Motor neuron (in vitro differentiated cells): ENCODE measurements at regions of chr7 and their contacts with region 1.

Region 1: DNA sequence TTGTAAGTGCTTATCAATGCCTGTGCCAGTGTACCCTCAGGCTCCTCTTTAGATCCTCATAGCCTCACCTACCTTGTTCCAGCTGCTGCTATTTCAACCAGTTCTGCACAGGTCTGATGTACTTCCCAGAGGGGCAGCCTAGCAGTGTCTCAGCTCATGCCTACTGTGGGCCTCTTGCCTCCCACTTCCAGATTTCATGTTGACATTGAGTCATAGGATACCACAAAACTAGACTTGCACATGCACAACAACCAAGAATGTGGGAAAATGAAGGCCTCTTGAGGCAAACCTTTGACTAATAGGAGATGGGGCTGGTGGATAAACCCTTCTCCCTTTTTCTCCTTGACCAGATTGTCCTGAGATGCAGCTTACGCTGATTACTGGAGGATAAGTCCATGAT is 31.0 kb downstream of the PON3 start:
- ATAC-seq: no peak
- H3K4me3 ChIP-seq: no peak overlapping the region
- H3K27ac ChIP-seq: no peak overlapping the region
- H3K4me1 ChIP-seq: no peaks in the 10 kb centered on the region

Region 2: GRCh38 chr7:94580596-94580995 is 784.6 kb before region 1 on chr7:
- in situ Hi-C with region 1: no loop called
- ATAC-seq: peak in 2 of 8 experiments; percentile 22 to 45
- H3K4me3 ChIP-seq: no peak overlapping the region
- H3K27ac ChIP-seq: no peak overlapping the region
- H3K4me1 ChIP-seq: no peaks in the 10 kb centered on the region

Region 3: GRCh38 chr7:95476904-95477594 is 111.9 kb after region 1 on chr7:
- in situ Hi-C with region 1: loop called in 1 of 9 experiments (anchors 10 kb)
- ATAC-seq: peak in 7 of 8 experiments; percentile 12 to 49 (median 36)
- H3K4me3 ChIP-seq: no peak overlapping the region
- H3K27ac ChIP-seq: no peak overlapping the region
- H3K4me1 ChIP-seq: peaks cover 35 to 49% of the 10 kb centered on the region in 2 donors